AG04450 (cell line): ENCODE measurements at regions of chr12 and their contacts with region 1.

Region 1: GRCh38 chr12:116880817-116881324 is 370 bp downstream of the HRK start:
- DNase-seq: no peak
- H3K4me3 ChIP-seq: peak overlapping the region; percentile 4; the same call in 1 of the 2 replicates
- H3K27ac ChIP-seq: no peak overlapping the region
- H3K27me3 ChIP-seq: peaks cover 73% of the 10 kb centered on the region
- CTCF ChIP-seq: no peak

Region 2: GRCh38 chr12:116703214-116703795 is 177.6 kb before region 1 on chr12:
- CTCF ChIA-PET with region 1: interaction called, 37 read pairs
- POLR2A ChIA-PET with region 1: no interaction called
- DNase-seq: no peak
- H3K4me3 ChIP-seq: no peak overlapping the region
- H3K27ac ChIP-seq: no peak overlapping the region
- H3K27me3 ChIP-seq: no peaks in the 10 kb centered on the region
- CTCF ChIP-seq: peak; percentile 95

Region 3: DNA sequence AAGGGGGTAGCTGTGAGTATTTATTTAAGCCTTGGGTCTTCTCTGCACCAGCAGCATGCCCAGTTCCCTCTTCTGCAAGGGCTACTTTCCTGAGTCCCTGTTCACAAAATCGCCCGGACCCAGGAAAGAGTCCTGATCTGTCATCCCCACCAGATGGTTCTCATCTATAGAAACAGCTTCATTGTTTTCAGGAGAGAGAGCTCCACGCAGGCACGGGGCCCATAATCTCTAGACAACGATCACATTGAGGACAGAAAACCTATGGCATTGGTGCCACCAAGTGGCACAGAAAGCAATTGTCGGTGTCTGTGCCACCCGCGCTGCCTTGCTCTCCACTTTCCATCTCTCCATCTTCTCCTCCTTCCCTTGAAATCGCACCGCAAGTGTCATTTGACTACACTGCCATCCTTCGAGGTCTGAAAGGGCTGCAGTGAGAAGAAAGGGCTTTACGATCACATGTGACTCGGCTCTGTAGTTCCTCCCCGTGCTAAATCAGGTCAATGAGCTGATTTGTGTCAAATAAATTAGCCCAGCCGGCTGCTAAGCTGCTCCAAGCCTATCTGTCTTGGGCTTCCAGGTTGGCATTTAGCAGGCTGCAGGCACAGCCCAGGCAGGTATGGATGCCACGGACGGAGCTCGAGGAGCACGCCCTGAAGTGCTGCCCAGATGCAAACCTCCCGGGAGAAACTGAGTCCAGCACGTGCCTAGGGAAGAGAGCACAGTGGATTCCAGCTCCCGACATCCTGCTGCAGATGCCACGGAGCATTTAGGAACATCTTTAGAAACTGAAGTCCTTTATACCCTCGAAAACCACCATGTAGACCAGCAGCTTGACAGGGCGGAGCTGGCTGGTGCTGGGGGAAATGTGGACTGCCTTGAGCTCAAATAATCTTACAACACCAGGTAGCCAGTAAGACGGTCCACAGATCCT is 171.8 kb before region 1 on chr12:
- CTCF ChIA-PET with region 1: interaction called, 37 read pairs
- POLR2A ChIA-PET with region 1: no interaction called
- DNase-seq: no peak
- H3K4me3 ChIP-seq: no peak overlapping the region
- H3K27ac ChIP-seq: no peak overlapping the region
- H3K27me3 ChIP-seq: no peaks in the 10 kb centered on the region
- CTCF ChIP-seq: peak; percentile 40